ENCODE measurements at regions of chr13 and their contacts with region 1.

Region 1: DNA sequence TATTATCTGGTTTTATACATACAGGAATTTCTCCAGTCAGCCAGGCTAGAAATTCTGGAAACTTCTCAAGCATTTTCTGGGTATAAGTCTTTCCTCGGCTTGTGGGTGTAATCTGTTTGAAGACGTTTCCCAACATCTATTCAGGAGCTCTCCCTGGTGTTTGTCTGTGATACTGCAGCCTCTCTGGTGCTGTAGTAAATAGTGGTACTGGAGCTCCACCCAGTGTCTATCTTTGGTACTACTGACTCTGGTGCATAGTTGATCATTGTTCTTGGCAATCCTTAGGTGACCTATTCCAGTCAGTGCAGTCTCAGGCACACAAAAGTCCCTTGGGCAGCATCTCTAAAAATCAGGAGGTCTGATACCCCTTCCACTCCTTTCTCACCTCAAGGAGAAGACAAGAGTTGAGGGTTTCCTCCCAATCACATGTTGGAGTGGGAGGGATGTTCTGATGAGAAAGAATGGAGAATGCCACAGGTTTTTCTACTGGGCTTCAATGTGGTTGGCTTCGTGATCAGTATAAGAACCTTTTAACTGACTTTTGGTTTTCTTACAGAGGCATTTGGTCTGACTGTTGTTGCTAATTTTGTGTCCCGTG is 115.5 kb downstream of the CYSLTR2 start:
- DNase-seq: peak; percentile 74
- H3K4me3 ChIP-seq: no peak overlapping the region
- H3K27ac ChIP-seq: no peak overlapping the region
- H3K4me1 ChIP-seq: no peaks in the 10 kb centered on the region
- H3K27me3 ChIP-seq: no peaks in the 10 kb centered on the region
- CTCF ChIP-seq: peak; percentile 100

Region 2: GRCh38 chr13:48094781-48095502 is 674.3 kb before region 1 on chr13 and contains the start of gene MED4:
- CTCF ChIA-PET with region 1: no interaction called
- dilution Hi-C with region 1: no loop called
- in situ Hi-C with region 1: loop called in 1 of 2 experiments (anchors 25 kb)
- intact Hi-C with region 1: loop called (anchors 10 kb)
- DNase-seq: peak; percentile 92
- H3K4me3 ChIP-seq: peak within 1 kb of the TSS; percentile 73 to 98 (median 86)
- H3K27ac ChIP-seq: peak within 1 kb of the TSS; percentile 83
- H3K4me1 ChIP-seq: peaks cover 10% of the 10 kb centered on the region
- H3K27me3 ChIP-seq: no peaks in the 10 kb centered on the region
- CTCF ChIP-seq: peak; percentile 98 to 100
- total RNA-seq, gene MED4: 24.8 to 43.1 TPM

Region 3: DNA sequence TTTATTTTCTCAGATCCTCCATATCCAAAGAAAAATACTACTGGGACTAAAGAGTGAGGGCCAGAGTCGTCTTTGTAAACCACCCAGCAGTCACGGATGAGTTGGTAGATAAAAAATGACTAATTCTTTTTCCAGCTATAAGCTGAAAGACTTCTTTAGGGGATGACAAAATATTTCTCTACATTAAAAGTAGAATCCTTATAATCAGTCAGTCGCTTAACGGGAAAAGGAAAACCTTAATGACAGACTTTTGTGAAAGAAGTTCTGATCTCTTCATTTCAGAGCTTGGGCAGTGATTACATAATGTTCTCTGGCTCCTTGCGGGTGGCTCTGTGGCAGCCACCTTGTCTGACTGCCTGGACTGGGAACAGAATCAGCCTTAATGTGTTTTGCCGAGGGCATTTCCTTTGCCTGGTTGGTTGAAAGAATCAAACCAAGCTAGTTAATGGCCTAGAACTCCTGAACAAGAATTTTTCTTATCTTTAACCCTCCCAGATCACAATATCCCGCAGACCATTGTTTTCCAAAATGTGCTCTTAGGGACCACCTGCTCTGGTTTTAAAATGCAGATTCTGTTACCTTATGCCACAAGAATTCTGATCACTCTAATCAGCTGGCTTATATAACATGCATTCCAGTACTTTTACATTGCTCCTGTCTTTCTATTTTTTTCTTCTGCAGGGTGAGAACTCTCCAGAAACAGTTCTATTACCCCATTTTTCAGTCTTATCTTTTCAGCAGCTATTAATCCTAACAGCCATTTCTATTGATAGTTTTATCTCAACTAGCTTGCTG is 533.7 kb before region 1 on chr13:
- CTCF ChIA-PET with region 1: no interaction called
- dilution Hi-C with region 1: no loop called
- in situ Hi-C with region 1: no loop called
- intact Hi-C with region 1: no loop called
- DNase-seq: peak; percentile 62
- H3K4me3 ChIP-seq: peak overlapping the region; percentile 89 to 99 (median 99)
- H3K27ac ChIP-seq: peak overlapping the region; percentile 92
- H3K4me1 ChIP-seq: peaks cover 32% of the 10 kb centered on the region
- H3K27me3 ChIP-seq: no peaks in the 10 kb centered on the region
- CTCF ChIP-seq: no peak

Region 4: DNA sequence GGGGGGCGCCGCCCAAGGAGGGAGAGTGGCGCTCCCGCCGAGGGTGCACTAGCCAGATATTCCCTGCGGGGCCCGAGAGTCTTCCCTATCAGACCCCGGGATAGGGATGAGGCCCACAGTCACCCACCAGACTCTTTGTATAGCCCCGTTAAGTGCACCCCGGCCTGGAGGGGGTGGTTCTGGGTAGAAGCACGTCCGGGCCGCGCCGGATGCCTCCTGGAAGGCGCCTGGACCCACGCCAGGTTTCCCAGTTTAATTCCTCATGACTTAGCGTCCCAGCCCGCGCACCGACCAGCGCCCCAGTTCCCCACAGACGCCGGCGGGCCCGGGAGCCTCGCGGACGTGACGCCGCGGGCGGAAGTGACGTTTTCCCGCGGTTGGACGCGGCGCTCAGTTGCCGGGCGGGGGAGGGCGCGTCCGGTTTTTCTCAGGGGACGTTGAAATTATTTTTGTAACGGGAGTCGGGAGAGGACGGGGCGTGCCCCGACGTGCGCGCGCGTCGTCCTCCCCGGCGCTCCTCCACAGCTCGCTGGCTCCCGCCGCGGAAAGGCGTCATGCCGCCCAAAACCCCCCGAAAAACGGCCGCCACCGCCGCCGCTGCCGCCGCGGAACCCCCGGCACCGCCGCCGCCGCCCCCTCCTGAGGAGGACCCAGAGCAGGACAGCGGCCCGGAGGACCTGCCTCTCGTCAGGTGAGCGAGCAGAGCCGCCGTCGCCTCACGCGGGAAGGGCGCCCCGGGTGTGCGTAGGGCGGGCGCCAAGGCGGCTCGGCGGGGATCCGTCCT is 465.7 kb before region 1 on chr13 and contains the start of gene RB1:
- CTCF ChIA-PET with region 1: no interaction called
- dilution Hi-C with region 1: no loop called
- in situ Hi-C with region 1: loop called (anchors 25 kb)
- intact Hi-C with region 1: no loop called
- DNase-seq: peak; percentile 94
- H3K4me3 ChIP-seq: peak within 1 kb of the TSS; percentile 65 to 99 (median 86)
- H3K27ac ChIP-seq: peak within 1 kb of the TSS; percentile 97
- H3K4me1 ChIP-seq: peaks cover 18% of the 10 kb centered on the region
- H3K27me3 ChIP-seq: no peaks in the 10 kb centered on the region
- CTCF ChIP-seq: peak in 1 of 2 donors; percentile 1
- total RNA-seq, gene RB1: 34.7 to 48.6 TPM

Region 5: DNA sequence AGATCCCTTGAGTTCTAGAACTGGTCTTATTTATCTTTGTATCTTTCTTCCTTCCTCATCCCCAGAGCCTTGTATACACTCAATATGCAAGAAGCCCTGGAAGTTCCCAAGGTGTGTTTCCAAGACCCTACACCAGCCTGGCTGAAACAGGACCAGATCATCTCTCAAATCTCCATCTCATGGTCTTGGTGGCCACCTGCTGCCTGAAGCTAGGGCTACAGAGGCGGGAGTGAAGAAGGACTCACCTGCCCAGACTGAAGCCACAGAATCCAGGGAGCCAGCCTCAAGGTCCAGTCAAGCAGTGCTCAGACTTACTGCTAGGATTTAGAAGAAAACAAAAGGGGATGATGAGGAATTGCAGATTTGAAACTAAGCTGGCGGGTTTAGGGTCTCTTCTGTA is 121.6 kb before region 1 on chr13:
- CTCF ChIA-PET with region 1: no interaction called
- dilution Hi-C with region 1: no loop called
- in situ Hi-C with region 1: no loop called
- intact Hi-C with region 1: loop called (anchors 2 kb)
- DNase-seq: no peak
- H3K4me3 ChIP-seq: no peak overlapping the region
- H3K27ac ChIP-seq: no peak overlapping the region
- H3K4me1 ChIP-seq: no peaks in the 10 kb centered on the region
- H3K27me3 ChIP-seq: peaks cover 3% of the 10 kb centered on the region
- CTCF ChIP-seq: peak; percentile 7 to 18

Region 6: DNA sequence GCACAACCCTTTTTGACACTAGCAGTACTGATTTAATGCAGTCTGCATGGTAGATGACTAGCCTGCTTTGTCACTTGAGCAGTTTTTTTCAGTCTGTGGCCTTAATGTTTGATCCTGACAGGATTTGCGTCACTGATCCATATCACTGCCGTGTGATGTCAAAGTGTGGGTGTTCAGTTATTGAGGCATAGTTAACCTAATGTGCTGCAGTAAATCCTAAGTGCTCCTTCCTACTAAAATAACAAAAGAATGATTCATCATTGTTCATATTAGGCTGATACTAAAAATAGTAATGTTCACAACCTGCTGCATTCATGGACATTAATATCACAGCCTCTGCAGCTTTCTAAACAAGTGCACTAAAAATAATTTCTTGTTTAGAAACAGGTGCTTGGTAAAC is 329.0 kb after region 1 on chr13:
- CTCF ChIA-PET with region 1: no interaction called
- dilution Hi-C with region 1: no loop called
- in situ Hi-C with region 1: no loop called
- intact Hi-C with region 1: no loop called
- DNase-seq: peak; percentile 94
- H3K4me3 ChIP-seq: no peak overlapping the region
- H3K27ac ChIP-seq: peak overlapping the region; percentile 88
- H3K4me1 ChIP-seq: peaks cover 22% of the 10 kb centered on the region
- H3K27me3 ChIP-seq: no peaks in the 10 kb centered on the region
- CTCF ChIP-seq: no peak

Region 7: GRCh38 chr13:49278211-49278610 is 509.0 kb after region 1 on chr13:
- CTCF ChIA-PET with region 1: no interaction called
- dilution Hi-C with region 1: no loop called
- in situ Hi-C with region 1: no loop called
- intact Hi-C with region 1: loop called (anchors 5 kb)
- DNase-seq: no peak
- H3K4me3 ChIP-seq: no peak overlapping the region
- H3K27ac ChIP-seq: no peak overlapping the region
- H3K4me1 ChIP-seq: no peaks in the 10 kb centered on the region
- H3K27me3 ChIP-seq: no peaks in the 10 kb centered on the region
- CTCF ChIP-seq: no peak

Measured in mammary epithelial cell (primary cell).